HEK293T (cell line): ENCODE measurements at regions of chr2 and their contacts with region 1.

Region 1: DNA sequence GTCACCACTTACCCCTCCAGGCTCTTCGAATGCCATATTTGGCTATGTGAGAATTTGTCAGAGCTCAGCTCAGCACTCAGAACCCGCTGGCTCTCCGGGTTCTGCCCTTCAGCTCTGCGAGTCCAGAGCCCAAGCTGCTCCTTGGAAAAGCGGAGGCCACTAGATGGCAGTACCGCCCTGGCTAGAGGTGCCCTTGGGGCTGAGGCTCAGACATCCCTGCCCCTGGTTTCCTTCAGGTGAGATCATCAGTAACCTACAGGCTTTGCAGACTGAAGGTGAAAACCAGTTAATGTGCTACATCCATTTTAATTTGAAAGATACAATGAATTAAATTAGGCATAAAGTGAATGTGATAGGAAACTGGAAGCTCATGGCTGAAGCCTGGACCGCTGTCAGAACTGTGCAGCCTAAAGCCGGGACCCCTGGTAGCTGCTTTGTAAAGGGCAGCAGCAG is 285.6 kb downstream of the AGAP1 start:
- DNase-seq: peak; percentile 75

Region 2: DNA sequence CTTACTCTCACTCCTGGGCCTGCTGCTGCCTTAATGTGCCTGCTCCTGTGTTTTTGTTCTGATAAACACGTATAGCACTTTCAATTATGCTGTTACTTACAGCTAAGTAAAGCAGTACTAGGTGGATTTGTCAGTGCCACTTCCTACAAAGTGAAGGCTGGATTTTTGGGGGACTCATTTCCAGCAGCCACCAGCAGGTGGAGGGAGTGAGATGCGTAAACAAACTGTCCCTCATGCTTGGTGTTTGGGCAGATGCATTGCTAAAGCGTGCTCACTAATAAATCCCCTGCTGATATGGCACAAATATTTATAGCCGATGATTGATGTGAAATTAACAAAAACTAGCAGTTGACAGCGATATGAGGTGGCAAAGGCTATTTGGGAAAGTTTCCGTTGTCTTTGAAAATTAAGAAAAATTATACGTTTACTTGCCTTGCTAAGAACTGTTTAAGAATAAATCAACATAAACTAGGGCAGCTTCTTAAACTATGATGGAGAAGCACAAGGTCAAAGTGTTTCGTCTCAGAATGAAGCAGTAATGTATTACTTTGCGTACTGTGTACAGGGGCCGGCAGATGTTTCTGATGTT is 184.0 kb before region 1 on chr2:
- CTCF ChIA-PET with region 1: no interaction called
- POLR2A ChIA-PET with region 1: no interaction called
- DNase-seq: peak; percentile 57

Region 3: GRCh38 chr2:235766278-235766677 is 13.2 kb before region 1 on chr2:
- CTCF ChIA-PET with region 1: interaction called, 14 read pairs
- POLR2A ChIA-PET with region 1: no interaction called
- DNase-seq: peak; percentile 65

Region 4: DNA sequence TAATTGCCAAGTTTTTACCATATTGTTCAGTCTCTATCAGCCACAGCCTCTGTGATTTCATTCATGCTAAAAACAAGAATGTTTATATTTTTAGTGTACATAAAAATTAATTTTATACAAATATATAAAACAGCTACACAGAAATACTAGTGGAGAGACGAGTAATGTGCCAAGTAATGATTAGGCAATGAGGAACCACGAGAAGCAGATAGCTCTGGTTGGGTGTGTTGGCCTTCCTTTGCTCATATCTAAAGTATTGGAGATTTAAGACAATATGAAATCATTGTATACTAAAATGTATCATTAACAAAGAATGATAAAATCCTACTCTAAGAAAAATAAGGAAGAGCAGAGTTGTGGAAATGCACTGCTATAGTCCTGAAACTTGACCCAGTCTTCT is 41.1 kb after region 1 on chr2:
- CTCF ChIA-PET with region 1: no interaction called
- POLR2A ChIA-PET with region 1: no interaction called
- DNase-seq: no peak

Region 5: GRCh38 chr2:236180831-236181453 is 401.5 kb after region 1 on chr2:
- CTCF ChIA-PET with region 1: interaction called, 23 read pairs
- POLR2A ChIA-PET with region 1: interaction called, 7 read pairs
- DNase-seq: peak; percentile 61

Region 6: DNA sequence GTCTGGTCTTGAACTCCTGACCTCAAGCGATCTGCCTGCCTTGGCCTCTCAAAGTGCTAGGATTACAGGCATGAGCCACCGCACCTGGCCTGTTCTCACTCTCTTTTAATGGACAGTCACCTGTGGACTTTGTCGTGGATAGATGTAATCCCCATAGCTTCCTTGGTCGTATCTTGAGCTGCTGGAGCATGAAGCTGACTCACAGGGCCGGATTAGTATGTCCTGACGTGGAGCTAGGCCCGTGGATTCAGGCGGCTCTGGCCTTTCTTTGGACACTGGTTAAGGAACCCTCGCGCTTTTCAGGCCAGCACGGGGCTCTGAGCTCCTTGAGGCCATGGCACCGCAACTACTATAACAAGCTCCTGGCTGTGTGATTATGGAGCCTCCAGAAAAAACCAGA is 416.3 kb after region 1 on chr2:
- CTCF ChIA-PET with region 1: no interaction called
- POLR2A ChIA-PET with region 1: no interaction called
- DNase-seq: no peak